GM12878 (cell line): ENCODE measurements at regions of chr19 and their contacts with region 1.

Region 1: DNA sequence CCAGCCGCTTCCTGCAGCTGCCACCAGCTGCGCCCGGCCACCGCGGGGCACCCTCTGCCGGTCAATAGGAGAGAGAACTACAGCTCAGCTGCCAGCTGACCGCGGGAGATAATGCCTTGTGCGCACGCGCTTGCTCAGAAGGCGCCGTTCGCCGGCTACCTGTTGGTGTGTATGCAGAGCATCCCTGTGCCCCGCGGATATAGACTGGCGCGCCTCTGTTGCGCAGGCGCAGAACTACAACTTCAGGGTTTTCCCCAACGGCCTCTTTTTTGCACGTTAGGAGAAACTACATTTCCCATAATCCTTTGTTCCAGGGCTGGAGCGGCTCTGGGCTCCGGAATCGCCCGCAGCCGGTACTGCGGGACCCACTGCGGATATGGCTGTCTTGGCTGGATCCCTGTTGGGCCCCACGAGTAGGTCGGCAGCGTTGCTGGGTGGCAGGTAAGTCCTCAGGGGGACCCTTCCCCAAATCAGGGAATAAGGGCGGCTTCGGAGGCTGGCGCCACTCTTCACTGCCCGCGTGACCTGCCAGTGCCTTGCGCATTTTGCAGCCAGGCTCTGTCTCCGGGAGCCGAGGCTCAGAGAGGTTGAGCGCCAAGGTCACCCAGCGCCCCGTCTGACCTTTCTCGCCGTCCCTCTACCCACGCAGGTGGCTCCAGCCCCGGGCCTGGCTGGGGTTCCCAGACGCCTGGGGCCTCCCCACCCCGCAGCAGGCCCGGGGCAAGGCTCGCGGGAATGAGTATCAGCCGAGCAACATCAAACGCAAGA is at the start of gene MRPL34:
- DNase-seq: peak; percentile 99
- ATAC-seq: peak; percentile 79
- H3K4me3 ChIP-seq: peak within 1 kb of the TSS; percentile 83
- H3K27ac ChIP-seq: peak within 1 kb of the TSS; percentile 84
- H3K4me1 ChIP-seq: peaks cover 22% of the 10 kb centered on the region
- H3K27me3 ChIP-seq: no peaks in the 10 kb centered on the region
- CTCF ChIP-seq: peak; percentile 78 to 91 (median 80); a peak in 5 of 6 replicates
- EP300 ChIP-seq: no peak; a peak in 1 of 4 replicates
- POLR2A ChIP-seq: peak; percentile 73
- RAD21 ChIP-seq: peak; percentile 36; the same call in 1 of the 2 replicates
- polyA plus RNA-seq, gene MRPL34: 8.6 to 25.2 TPM

Region 2: GRCh38 chr19:16062789-16063188 is 1242.9 kb before region 1 on chr19:
- CTCF ChIA-PET with region 1: no interaction called
- POLR2A ChIA-PET with region 1: interaction called, 12 read pairs
- RAD21 ChIA-PET with region 1: no interaction called
- SMC1A ChIA-PET with region 1: no interaction called
- in situ Hi-C with region 1: no loop called
- intact Hi-C with region 1: no loop called
- DNase-seq: no peak
- ATAC-seq: peak; percentile 77
- H3K4me3 ChIP-seq: no peak overlapping the region
- H3K27ac ChIP-seq: no peak overlapping the region
- H3K4me1 ChIP-seq: peaks cover 6% of the 10 kb centered on the region; the same call in 1 of the 2 replicates
- H3K27me3 ChIP-seq: no peaks in the 10 kb centered on the region
- CTCF ChIP-seq: peak; percentile 60 to 95 (median 91)
- EP300 ChIP-seq: no peak
- POLR2A ChIP-seq: no peak
- RAD21 ChIP-seq: peak; percentile 25

Region 3: DNA sequence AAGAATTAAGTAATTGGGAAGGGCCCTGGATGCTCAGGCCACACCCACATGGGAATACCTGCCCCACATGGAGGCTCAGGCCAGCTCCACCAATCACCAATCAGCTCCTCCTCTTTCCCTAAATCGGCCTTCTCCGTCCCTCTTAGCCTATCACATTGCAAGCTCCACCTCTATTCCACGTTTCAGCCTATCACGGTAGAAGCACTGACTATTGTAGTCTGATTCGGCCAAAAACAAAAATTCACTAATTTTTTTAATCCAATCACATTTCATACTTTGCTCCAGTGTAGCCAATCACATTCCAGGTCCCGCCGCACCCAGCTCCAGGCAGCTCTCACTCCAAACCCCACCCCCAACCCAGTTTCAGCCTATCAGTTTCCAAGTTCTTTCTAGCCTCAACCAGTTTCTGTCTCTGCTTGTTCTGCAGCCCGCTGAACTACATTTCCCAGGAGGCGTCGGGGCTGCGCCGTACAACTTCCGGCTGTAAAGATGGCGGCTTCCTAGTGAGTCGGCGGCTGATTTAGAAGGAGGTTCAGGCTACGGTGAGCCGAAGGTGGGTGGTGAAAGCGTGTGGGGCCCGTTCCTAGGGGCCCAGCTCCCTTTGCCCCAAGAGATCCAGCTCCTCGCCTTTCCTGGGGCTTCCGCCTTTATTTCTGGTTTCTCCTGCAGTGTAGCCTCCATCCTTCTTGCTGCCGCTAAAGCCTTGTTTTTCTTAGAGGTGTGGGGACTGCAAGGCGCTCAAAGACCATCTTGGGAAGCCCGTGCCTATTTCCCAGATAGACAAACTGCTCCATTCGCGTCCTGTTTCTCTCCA is 38.5 kb before region 1 on chr19 and contains the start of gene BABAM1:
- CTCF ChIA-PET with region 1: interaction called, 10 read pairs
- POLR2A ChIA-PET with region 1: interaction called, 6 read pairs
- RAD21 ChIA-PET with region 1: interaction called, 7 read pairs
- SMC1A ChIA-PET with region 1: interaction called, 5 read pairs
- in situ Hi-C with region 1: no loop called
- intact Hi-C with region 1: no loop called
- DNase-seq: peak; percentile 100
- ATAC-seq: peak; percentile 97
- H3K4me3 ChIP-seq: peak within 1 kb of the TSS; percentile 93
- H3K27ac ChIP-seq: peak within 1 kb of the TSS; percentile 81
- H3K4me1 ChIP-seq: peaks cover 11% of the 10 kb centered on the region
- H3K27me3 ChIP-seq: no peaks in the 10 kb centered on the region
- CTCF ChIP-seq: no peak
- EP300 ChIP-seq: no peak
- POLR2A ChIP-seq: peak; percentile 84
- RAD21 ChIP-seq: no peak
- polyA plus RNA-seq, gene BABAM1: 11.9 to 37.4 TPM

Region 4: DNA sequence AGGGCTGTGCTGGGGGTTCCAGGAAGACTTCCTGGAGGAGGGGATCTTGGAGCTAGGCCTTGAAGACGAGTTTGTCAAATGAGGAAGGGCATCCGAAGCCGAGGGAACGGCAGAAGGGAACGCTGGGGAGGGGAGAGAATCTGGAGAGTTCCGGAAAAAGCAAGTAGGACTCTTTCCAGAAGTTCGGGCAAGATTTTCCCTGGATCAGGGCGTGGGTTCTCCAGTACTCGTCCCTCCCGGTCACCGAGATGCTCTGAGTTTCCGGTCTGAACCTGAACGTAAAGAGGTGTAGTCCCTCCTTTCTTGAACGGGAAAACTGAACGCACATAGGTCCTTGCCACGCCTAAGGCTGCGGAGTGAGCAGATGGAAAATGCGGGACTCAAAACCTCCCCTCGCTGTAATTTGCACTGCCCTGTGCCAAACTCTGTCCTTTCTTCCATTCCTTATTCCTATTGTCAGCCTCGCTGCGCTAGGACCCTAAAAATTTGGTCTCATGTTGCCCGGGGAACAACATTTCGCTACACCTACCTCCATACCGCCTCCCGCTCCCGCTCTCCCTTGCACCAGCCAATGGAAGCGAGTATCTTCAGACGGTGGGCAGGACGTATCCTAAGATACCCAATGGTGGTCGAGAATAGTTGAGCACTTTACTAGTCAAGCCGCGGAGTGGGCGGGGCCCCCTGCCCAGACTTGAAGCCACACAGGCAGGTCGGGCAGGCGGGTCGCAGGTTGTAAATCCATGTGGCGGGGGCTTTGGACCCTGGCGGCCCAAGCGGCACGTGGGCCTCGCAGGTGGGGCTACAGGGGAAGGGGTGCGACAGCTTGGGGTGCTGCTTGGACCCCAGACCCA is 31.4 kb after region 1 on chr19 and contains the start of gene GTPBP3:
- CTCF ChIA-PET with region 1: interaction called, 16 read pairs
- POLR2A ChIA-PET with region 1: interaction called, 24 read pairs
- RAD21 ChIA-PET with region 1: interaction called, 9 read pairs
- SMC1A ChIA-PET with region 1: interaction called, 8 read pairs
- in situ Hi-C with region 1: no loop called
- intact Hi-C with region 1: loop called (anchors 1 kb)
- DNase-seq: peak; percentile 96
- ATAC-seq: peak; percentile 89
- H3K4me3 ChIP-seq: peak within 1 kb of the TSS; percentile 100
- H3K27ac ChIP-seq: peak within 1 kb of the TSS; percentile 84
- H3K4me1 ChIP-seq: peaks cover 21% of the 10 kb centered on the region
- H3K27me3 ChIP-seq: no peaks in the 10 kb centered on the region
- CTCF ChIP-seq: no peak
- EP300 ChIP-seq: no peak
- POLR2A ChIP-seq: peak; percentile 87
- RAD21 ChIP-seq: no peak
- polyA plus RNA-seq, gene GTPBP3: 2.9 to 4.1 TPM

Region 5: DNA sequence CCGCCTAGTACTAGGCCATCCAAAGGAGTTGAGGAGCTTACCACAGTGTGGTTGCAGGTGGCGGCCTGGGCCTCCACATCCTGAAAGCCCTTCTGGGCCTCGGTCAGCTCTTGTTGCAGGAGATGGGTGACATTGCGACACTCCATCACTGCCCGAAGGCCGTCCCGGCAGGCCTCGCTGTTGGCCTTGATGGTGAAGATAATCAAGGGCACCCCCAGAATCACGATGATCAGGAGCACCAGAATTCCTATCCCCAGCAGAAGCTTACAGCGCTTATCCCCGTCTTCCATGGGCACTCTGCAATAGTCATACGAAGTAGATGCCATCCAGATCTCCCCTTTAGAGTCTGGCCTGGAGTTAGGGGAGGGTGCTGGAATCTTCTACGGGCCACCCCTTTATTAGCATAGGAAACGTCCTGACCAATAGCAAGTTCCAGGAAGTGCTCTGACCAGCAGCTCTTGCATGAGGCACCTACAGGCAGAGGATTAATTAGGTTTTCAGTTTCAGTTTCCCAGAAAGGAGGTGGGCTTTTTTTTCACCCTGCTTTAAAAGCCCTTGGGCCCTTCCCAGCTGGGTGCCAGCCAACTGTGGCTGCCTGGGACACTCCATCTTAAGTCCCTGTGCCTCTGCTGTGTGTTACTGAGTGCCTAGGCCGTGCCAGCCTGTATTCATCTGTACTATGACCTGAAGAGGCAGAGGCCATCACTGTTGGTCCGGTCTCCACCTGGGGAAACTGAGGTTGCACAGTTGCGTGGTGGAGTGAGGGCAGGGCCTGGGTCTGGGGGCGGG is 99.7 kb after region 1 on chr19 and contains the start of gene BST2:
- CTCF ChIA-PET with region 1: interaction called, 3 read pairs
- POLR2A ChIA-PET with region 1: interaction called, 12 read pairs
- RAD21 ChIA-PET with region 1: interaction called, 4 read pairs
- SMC1A ChIA-PET with region 1: no interaction called
- in situ Hi-C with region 1: no loop called
- intact Hi-C with region 1: no loop called
- DNase-seq: peak; percentile 87
- ATAC-seq: peak; percentile 92
- H3K4me3 ChIP-seq: peak within 1 kb of the TSS; percentile 83
- H3K27ac ChIP-seq: peak within 1 kb of the TSS; percentile 99
- H3K4me1 ChIP-seq: peaks cover 6% of the 10 kb centered on the region
- H3K27me3 ChIP-seq: no peaks in the 10 kb centered on the region
- CTCF ChIP-seq: no peak
- EP300 ChIP-seq: no peak
- POLR2A ChIP-seq: peak; percentile 82
- RAD21 ChIP-seq: no peak
- polyA plus RNA-seq, gene BST2: 16.6 to 111 TPM

Region 6: GRCh38 chr19:17541184-17541759 is 235.6 kb after region 1 on chr19:
- CTCF ChIA-PET with region 1: no interaction called
- POLR2A ChIA-PET with region 1: no interaction called
- RAD21 ChIA-PET with region 1: no interaction called
- SMC1A ChIA-PET with region 1: no interaction called
- in situ Hi-C with region 1: no loop called
- intact Hi-C with region 1: no loop called
- DNase-seq: no peak
- ATAC-seq: no peak
- H3K4me3 ChIP-seq: no peak overlapping the region
- H3K27ac ChIP-seq: no peak overlapping the region
- H3K4me1 ChIP-seq: peaks cover 13% of the 10 kb centered on the region
- H3K27me3 ChIP-seq: no peaks in the 10 kb centered on the region
- CTCF ChIP-seq: no peak
- EP300 ChIP-seq: no peak
- POLR2A ChIP-seq: no peak
- RAD21 ChIP-seq: no peak

Region 7: DNA sequence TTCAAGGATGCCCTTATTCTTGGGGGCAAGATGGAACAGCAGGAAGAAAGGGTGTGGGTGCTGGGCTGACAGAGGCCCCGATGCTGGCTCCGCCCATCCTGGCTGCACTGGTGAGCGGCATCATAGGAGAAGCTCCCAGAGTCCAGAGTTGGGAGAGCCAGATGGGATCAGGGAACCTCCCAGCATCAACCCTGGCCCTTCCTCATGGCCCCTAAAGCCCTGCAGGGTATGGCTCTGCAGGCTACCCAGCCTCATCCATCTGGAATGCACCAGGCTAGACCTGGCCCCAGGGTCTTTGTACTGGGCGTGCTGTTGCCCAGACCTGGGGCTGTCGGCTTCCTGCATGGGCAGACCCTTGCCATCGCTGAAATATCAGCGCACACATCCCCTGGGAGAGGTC is 1224.1 kb after region 1 on chr19:
- CTCF ChIA-PET with region 1: no interaction called
- POLR2A ChIA-PET with region 1: no interaction called
- RAD21 ChIA-PET with region 1: no interaction called
- SMC1A ChIA-PET with region 1: no interaction called
- in situ Hi-C with region 1: no loop called
- intact Hi-C with region 1: no loop called
- DNase-seq: no peak
- ATAC-seq: no peak
- H3K4me3 ChIP-seq: no peak overlapping the region
- H3K27ac ChIP-seq: no peak overlapping the region
- H3K4me1 ChIP-seq: no peaks in the 10 kb centered on the region
- H3K27me3 ChIP-seq: no peaks in the 10 kb centered on the region
- CTCF ChIP-seq: no peak
- EP300 ChIP-seq: no peak
- POLR2A ChIP-seq: no peak
- RAD21 ChIP-seq: no peak